Activated CD4-positive, alpha-beta memory T cell treated with anti-CD3 and anti-CD28 coated beads for 36 hours (primary cell): ENCODE measurements at regions of chr5 and their contacts with region 1.

Region 1: DNA sequence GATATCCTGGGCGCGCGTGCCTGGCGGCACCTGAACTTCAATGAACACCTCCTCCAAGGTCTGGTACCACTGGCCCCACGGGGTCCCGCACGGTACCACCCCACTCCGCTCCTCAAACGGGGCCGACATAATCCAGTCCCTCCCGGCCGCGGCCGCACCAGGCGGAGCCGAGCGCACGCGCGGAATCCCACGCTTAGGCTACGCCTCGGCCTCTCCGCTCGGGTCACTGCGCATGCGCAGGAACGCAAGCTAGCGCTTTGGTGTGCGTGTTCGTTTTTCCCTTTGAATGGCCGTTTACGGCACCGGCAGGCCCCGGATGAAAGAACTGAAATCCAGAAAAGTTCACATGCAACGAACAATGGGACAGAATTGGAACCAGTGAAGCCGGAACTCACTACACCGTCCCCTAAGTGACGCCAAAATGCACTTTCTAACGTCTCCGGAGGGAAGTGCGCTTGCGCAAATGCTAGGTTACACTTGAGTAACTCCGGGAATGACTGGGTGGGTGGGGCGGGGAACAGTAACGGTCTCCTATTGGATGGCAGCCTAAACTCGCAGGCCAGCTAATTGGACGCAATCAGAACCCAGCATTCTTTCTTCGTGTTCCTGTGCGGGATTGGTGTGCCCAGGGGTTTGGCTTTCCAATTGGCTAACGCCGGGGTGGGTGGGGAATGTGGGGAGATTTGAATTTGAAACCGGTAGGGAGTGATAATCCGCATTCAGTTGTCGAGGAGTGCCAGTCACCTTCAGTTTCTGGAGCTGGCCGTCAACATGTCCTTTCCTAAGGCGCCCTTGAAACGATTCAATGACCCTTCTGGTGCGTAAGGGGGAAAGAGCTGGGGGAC is at the starts of genes HMMR and NUDCD2:
- DNase-seq: peak; percentile 97
- H3K4me3 Mint-ChIP-seq: peak within 1 kb of the TSS; percentile 96
- H3K27ac Mint-ChIP-seq: peak within 1 kb of the TSS; percentile 100
- H3K4me1 Mint-ChIP-seq: peaks cover 35% of the 10 kb centered on the region
- H3K27me3 Mint-ChIP-seq: peaks cover 4% of the 10 kb centered on the region
- total RNA-seq, gene HMMR: 109 to 118 TPM
- total RNA-seq, gene NUDCD2: 46.4 to 48.6 TPM

Region 2: GRCh38 chr5:163437309-163438182 is 22.6 kb before region 1 on chr5 and contains the start of gene CCNG1:
- CTCF ChIA-PET with region 1: interaction called, 8 read pairs
- POLR2A ChIA-PET with region 1: interaction called, 130 read pairs
- intact Hi-C with region 1: loop called (anchors 1 kb)
- DNase-seq: peak; percentile 94
- H3K4me3 Mint-ChIP-seq: peak within 1 kb of the TSS; percentile 87
- H3K27ac Mint-ChIP-seq: peak within 1 kb of the TSS; percentile 63
- H3K4me1 Mint-ChIP-seq: peaks cover 41% of the 10 kb centered on the region
- H3K27me3 Mint-ChIP-seq: peaks cover 2% of the 10 kb centered on the region
- total RNA-seq, gene CCNG1: 139 to 164 TPM

Region 3: GRCh38 chr5:163727028-163727427 is 266.9 kb after region 1 on chr5:
- CTCF ChIA-PET with region 1: no interaction called
- POLR2A ChIA-PET with region 1: no interaction called
- intact Hi-C with region 1: no loop called
- DNase-seq: no peak
- H3K4me3 Mint-ChIP-seq: no peak overlapping the region
- H3K27ac Mint-ChIP-seq: no peak overlapping the region
- H3K4me1 Mint-ChIP-seq: no peaks in the 10 kb centered on the region
- H3K27me3 Mint-ChIP-seq: no peaks in the 10 kb centered on the region

Region 4: GRCh38 chr5:165457859-165458481 is 1997.8 kb after region 1 on chr5:
- CTCF ChIA-PET with region 1: no interaction called
- POLR2A ChIA-PET with region 1: no interaction called
- intact Hi-C with region 1: no loop called
- DNase-seq: no peak
- H3K4me3 Mint-ChIP-seq: no peak overlapping the region
- H3K27ac Mint-ChIP-seq: no peak overlapping the region
- H3K4me1 Mint-ChIP-seq: no peaks in the 10 kb centered on the region
- H3K27me3 Mint-ChIP-seq: no peaks in the 10 kb centered on the region